Left cardiac atrium (tissue), 4 donors: ENCODE measurements at regions of chr6 and their contacts with region 1.

Region 1: DNA sequence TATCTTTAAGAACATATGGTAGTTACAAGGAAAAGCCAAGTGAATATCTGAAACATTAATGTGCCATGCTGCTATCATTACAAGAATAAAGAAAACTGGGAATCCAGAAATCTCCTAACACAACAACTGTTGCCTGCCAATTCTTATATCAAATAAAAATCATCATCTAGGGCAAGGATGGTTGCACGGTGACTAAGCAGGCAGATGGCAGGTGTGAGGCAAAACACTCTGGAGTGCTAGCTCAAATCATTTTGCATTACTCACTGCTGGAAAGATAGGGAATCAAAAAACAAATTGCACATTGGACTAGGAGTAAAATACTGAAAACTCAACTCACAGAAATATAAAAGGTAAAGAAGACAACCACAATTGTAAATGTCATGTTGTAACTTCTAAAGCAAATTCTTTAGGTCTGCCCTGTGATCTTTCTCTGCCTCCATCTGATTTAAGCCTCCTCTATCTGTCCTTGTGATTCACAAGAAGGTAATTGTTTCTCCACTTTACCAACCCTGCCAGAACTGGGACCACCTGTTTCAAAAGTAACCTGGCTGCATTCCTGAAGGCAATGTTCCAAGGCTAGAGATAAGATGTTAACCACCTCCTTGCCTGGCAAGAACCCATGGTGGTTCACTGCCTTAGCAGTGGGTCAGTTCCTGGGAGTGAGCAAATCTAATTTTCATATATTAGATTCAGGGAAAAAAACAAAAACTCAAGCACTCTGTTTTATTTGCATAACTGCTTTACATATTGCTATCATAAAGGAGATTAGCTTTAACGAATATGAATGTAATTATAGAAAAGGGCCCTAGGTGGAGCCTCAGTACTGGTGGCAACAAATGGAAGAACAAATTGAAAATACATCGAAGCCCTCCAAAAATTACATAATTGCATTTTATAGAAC is 33.1 kb upstream of the LCA5 start:
- DNase-seq: no peak
- ATAC-seq: peak; percentile 72 to 96

Region 2: DNA sequence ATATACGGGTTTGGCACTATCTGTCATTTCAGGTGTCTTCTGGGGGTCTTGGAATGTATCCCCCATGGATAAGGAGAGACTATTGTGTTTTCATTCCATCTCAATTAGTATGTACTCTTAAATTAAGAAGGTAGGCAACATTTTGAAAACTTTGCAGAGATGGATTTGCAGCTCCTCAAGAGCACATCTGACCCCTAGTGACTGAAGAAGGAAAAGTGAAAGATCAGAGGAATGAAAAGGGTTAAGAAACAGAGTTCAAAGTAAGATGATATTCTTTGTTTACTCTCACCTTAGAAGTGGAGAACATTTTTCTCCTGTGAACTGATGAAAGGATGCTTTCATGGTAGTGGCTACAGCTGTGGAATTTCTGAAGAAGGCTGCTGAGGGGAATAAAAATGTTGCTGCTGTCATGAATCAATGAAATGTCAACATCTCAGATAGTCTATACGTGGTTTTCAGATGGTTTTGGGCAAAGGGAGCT is 102.3 kb after region 1 on chr6:
- intact Hi-C with region 1: loop called in 1 of 2 experiments (anchors 10 kb)
- DNase-seq: no peak
- ATAC-seq: no peak

Region 3: DNA sequence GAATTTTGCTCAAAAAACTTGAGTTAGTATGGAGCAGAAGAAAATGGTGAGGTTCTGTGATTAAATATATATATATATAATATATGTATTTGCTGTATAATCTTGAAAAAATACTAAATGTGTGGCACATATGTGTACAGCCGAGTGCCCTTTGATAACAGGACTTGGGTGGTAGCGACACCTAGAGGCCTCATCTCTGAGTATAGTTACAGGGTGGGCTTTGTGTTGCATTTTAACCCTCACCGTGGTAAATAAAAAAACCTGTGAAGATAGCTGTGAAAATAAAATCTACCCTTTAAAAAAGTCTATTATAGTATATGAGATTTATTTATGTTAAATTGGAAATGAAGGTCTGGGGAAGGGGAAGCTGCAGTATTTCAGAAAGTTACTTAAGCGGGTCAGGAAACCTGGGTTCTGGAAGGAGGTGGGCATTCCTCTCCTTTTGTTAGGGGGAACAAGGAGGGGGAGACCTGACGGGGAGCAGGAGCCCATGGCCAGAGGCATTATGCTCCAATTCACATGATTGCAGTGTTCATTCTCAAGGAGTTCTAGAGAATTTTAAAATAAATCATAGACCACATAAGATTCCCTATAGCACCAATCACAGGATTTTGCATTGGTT is 143.4 kb after region 1 on chr6:
- intact Hi-C with region 1: loop called in 1 of 2 experiments (anchors 10 kb)
- DNase-seq: peak; percentile 49
- ATAC-seq: peak; percentile 60 to 68

Region 4: DNA sequence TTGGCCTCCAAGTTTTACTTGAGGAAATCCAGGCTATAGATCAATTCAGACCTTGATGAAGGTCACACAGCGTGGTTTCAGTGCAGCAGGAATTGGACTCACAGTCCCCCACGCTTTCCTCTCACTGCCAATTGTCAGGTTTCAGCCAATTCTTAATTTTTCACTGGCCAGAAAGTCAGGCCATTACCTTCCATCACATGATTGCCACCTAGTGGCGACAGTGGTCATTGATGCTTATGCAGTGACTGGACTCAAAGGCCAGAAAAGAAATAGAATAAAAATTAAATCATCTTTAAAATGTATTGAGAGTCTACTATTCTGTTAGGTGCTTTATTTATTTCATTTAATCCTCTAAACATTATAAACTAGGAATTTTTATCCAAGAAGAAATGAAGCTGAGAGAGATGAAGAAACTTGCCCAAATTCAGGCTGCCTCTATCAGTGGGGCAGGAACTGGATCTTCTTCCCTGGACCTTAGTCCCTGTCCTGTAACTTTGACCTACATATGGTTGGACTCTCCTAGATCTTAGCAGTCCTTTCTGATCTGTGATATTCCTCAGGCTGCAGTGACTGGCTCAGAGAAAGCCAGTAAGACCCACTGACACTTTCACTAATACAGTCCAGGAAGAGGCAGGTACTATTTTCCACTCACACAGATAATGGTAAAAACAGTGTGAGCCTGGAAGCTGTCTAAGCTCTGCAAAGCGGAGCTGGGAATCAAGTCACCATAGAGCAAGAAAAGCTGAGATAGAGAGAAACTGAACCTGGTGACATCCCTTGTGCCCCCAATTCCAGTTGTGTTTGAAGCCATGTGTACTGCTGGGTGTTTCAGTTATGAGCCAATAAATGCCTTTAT is 243.7 kb after region 1 on chr6:
- intact Hi-C with region 1: loop called in 1 of 2 experiments (anchors 2 kb)
- DNase-seq: peak; percentile 75
- ATAC-seq: peak; percentile 56 to 88